ENCODE measurements at regions of chr17 and their contacts with region 1.

Region 1: GRCh38 chr17:77602062-77602746 is 356.3 kb upstream of the TNRC6C start:
- DNase-seq: peak; percentile 77
- H3K4me3 Mint-ChIP-seq: peak overlapping the region; percentile 67
- H3K27ac Mint-ChIP-seq: peak overlapping the region; percentile 98
- H3K4me1 Mint-ChIP-seq: peaks cover 31% of the 10 kb centered on the region
- H3K27me3 Mint-ChIP-seq: peaks cover 2% of the 10 kb centered on the region
- CTCF ChIP-seq: no peak

Region 2: DNA sequence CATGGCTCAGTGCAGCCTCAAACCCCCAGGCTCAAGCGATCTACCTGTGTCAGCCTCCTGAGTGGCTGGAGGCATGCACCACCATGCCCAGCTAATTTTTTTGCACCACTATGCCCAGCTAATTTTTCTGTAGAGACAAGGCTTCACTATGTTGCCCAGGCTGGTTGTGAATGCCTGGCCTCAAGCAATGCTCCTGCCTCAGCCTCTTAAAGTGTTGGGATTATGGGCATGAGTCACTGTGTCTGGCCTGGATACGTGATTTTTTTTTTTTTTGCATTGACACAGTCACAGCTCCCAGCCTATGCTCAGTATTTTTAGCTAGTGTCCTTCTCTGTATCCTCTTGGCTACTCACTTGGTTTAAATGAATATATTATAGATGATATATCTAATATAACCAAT is 20.7 kb before region 1 on chr17:
- CTCF ChIA-PET with region 1: no interaction called
- POLR2A ChIA-PET with region 1: interaction called, 11 read pairs
- intact Hi-C with region 1: no loop called
- DNase-seq: peak; percentile 73
- H3K4me3 Mint-ChIP-seq: no peak overlapping the region
- H3K27ac Mint-ChIP-seq: no peak overlapping the region
- H3K4me1 Mint-ChIP-seq: peaks cover 12% of the 10 kb centered on the region
- H3K27me3 Mint-ChIP-seq: no peaks in the 10 kb centered on the region
- CTCF ChIP-seq: no peak